CD8-positive, alpha-beta T cell (primary cell): ENCODE measurements at regions of chr7 and their contacts with region 1.

Region 1: DNA sequence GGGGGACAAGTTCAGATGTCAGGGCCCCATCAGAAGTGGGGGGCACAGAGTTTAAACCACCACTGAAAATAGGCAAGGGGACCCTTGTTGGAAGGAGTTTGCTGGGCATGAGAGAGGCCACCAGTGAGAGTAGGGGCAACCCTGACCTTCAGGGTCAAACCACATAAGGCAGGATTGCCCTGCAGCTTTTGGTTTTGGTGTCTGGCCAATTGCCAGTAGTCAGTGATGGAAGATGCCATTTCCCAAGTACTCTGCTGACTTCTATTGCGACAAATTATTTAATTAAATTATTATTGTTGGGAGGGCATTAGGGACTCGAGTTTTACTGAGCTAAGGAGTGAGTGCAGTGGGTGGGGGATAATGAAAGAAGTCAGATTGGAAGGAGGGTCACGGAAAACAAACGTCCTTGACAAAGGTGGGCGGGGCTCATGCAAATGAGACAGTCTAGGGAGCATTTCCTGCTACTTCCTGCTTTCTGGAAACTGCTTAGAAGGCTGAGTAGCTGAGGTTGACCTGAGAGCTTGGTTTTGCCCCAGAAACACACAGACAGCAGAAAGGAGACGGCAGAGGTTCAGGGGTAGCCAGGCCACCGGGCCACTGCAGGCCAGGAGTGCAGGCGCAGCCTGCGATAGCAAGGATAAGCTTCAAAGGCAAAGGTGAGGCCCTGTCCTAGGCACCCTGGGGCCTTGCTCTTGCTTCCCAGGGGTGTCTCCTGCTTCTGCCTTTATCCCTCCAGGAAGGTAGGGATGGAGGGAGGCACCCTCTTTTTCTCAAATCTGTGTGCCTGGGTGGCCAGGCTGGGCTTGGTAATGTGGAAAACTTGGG is 74.1 kb upstream of the ANLN start:
- DNase-seq: peak in 1 of 9 experiments; percentile 11
- ATAC-seq: no peak
- H3K4me3 ChIP-seq: no peak overlapping the region
- H3K4me3 Mint-ChIP-seq: no peak overlapping the region
- H3K27ac ChIP-seq: no peak overlapping the region
- H3K27ac Mint-ChIP-seq: no peak overlapping the region
- H3K4me1 ChIP-seq: no peaks in the 10 kb centered on the region
- H3K4me1 Mint-ChIP-seq: peaks cover 2% of the 10 kb centered on the region
- H3K27me3 ChIP-seq: no peaks in the 10 kb centered on the region
- H3K27me3 Mint-ChIP-seq: no peaks in the 10 kb centered on the region
- CTCF ChIP-seq: no peak

Region 2: GRCh38 chr7:35985126-35985754 is 330.3 kb before region 1 on chr7:
- CTCF ChIA-PET with region 1: interaction called, 34 read pairs
- POLR2A ChIA-PET with region 1: interaction called, 3 read pairs
- intact Hi-C with region 1: loop called (anchors 1 kb)
- DNase-seq: peak; percentile 63 to 86 (median 78)
- ATAC-seq: peak; percentile 100
- H3K4me3 ChIP-seq: no peak overlapping the region
- H3K4me3 Mint-ChIP-seq: no peak overlapping the region
- H3K27ac ChIP-seq: no peak overlapping the region
- H3K27ac Mint-ChIP-seq: no peak overlapping the region
- H3K4me1 ChIP-seq: no peaks in the 10 kb centered on the region
- H3K4me1 Mint-ChIP-seq: no peaks in the 10 kb centered on the region
- H3K27me3 ChIP-seq: no peaks in the 10 kb centered on the region
- H3K27me3 Mint-ChIP-seq: no peaks in the 10 kb centered on the region
- CTCF ChIP-seq: peak; percentile 82

Region 3: DNA sequence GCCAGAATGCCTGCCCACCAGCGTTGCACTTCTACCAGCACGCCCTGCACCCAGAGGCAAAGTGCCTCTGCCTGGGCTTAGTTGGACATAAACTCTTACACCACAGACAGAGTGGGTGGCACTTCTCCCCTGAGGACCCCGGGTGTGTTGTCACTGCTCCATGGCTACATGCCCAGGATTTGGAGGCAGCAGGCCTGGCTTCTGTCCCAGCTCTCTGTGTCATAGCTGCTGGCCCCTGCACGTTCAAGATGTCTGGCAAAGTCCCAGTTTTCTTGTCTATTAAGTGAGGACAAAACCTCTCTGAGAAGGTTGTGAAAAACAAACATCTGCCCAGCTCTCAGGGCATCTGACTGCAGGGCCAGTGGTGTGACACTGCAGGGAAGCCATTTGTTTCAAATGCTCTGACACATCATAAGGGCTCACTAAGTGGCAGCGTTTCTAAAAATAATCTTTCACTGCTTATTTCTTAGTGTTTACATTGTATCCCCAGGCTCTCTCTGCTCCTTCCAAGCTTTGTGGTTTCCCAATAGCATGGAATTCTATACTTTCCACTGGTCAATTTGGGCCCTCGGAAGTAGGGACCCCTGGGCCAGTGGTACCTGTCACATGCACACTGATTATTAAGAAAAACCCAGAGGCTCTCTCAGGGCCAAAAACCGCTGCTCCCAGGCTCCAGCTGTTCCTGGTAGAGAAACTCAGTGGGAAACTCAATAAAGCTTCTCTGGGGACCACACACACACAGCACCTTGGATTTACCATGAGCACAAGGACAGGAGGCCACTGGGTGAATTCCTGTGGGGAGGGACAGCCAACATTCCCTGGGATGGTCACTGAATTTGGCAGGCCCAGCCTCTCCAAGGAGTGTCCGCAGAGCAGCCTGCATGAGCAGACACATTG is 12.1 kb before region 1 on chr7:
- CTCF ChIA-PET with region 1: interaction called, 22 read pairs
- POLR2A ChIA-PET with region 1: no interaction called
- intact Hi-C with region 1: no loop called
- DNase-seq: no peak
- ATAC-seq: no peak
- H3K4me3 ChIP-seq: no peak overlapping the region
- H3K4me3 Mint-ChIP-seq: no peak overlapping the region
- H3K27ac ChIP-seq: no peak overlapping the region
- H3K27ac Mint-ChIP-seq: no peak overlapping the region
- H3K4me1 ChIP-seq: no peaks in the 10 kb centered on the region
- H3K4me1 Mint-ChIP-seq: no peaks in the 10 kb centered on the region
- H3K27me3 ChIP-seq: no peaks in the 10 kb centered on the region
- H3K27me3 Mint-ChIP-seq: no peaks in the 10 kb centered on the region
- CTCF ChIP-seq: no peak

Region 4: DNA sequence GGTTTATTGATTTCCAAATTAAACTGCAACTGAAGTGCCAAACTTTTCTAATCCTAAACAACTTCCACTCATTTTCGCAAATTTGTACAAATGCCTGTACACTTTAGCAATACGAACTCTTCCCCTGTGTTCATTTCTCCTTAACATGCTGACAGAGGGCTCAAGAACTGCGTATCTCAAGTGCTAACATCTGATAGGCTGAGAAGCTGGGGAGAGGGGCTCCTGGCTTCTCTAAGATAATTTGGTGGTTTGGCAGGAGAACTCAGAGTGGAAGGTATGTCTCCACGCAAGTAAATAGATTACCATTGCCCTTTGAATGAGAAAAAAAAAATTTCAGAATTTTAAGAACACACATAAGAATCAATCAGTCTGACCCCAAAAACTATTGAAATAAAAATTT is 20.9 kb after region 1 on chr7:
- CTCF ChIA-PET with region 1: interaction called, 15 read pairs
- POLR2A ChIA-PET with region 1: no interaction called
- intact Hi-C with region 1: no loop called
- DNase-seq: no peak
- ATAC-seq: no peak
- H3K4me3 ChIP-seq: no peak overlapping the region
- H3K4me3 Mint-ChIP-seq: no peak overlapping the region
- H3K27ac ChIP-seq: no peak overlapping the region
- H3K27ac Mint-ChIP-seq: no peak overlapping the region
- H3K4me1 ChIP-seq: no peaks in the 10 kb centered on the region
- H3K4me1 Mint-ChIP-seq: no peaks in the 10 kb centered on the region
- H3K27me3 ChIP-seq: no peaks in the 10 kb centered on the region
- H3K27me3 Mint-ChIP-seq: peaks cover 5% of the 10 kb centered on the region
- CTCF ChIP-seq: no peak